ENCODE measurements at regions of chr18 and their contacts with region 1.

Region 1: GRCh38 chr18:6044773-6045172 is 149.5 kb upstream of the TMEM200C start:
- DNase-seq: no peak
- ATAC-seq: no peak
- H3K4me3 ChIP-seq: no peak overlapping the region
- H3K27ac ChIP-seq: no peak overlapping the region
- H3K4me1 ChIP-seq: no peaks in the 10 kb centered on the region
- H3K27me3 ChIP-seq: no peaks in the 10 kb centered on the region
- CTCF ChIP-seq: no peak
- EP300 ChIP-seq: no peak
- POLR2A ChIP-seq: no peak
- RAD21 ChIP-seq: no peak

Region 2: DNA sequence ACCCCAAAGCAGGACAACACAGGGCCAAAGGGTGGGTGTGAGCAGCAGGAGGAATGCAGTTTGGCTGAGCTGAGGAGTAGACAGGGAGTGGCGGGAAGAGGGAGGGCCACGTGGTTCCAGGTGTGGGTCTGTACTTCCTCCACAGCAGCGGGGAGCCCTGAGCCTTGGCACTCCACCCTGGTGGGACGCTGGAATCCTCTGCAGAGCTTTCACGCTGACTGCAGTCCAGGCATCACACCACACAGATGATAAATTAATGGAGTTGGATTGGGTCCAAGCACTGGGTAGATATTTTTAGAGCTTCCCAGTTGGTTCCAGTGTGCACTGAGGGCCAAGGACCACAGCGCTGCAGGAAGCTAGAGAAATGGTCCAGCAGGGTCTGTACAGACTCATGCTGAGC is 82.4 kb before region 1 on chr18:
- CTCF ChIA-PET with region 1: no interaction called
- POLR2A ChIA-PET with region 1: no interaction called
- in situ Hi-C with region 1: no loop called
- intact Hi-C with region 1: no loop called
- DNase-seq: no peak
- ATAC-seq: no peak
- H3K4me3 ChIP-seq: no peak overlapping the region
- H3K27ac ChIP-seq: no peak overlapping the region
- H3K4me1 ChIP-seq: no peaks in the 10 kb centered on the region
- H3K27me3 ChIP-seq: no peaks in the 10 kb centered on the region
- CTCF ChIP-seq: no peak
- EP300 ChIP-seq: no peak
- POLR2A ChIP-seq: no peak
- RAD21 ChIP-seq: no peak

Region 3: GRCh38 chr18:5983488-5983887 is 61.3 kb before region 1 on chr18:
- CTCF ChIA-PET with region 1: no interaction called
- POLR2A ChIA-PET with region 1: no interaction called
- in situ Hi-C with region 1: no loop called
- intact Hi-C with region 1: no loop called
- DNase-seq: no peak
- ATAC-seq: no peak
- H3K4me3 ChIP-seq: no peak overlapping the region
- H3K27ac ChIP-seq: no peak overlapping the region
- H3K4me1 ChIP-seq: no peaks in the 10 kb centered on the region
- H3K27me3 ChIP-seq: no peaks in the 10 kb centered on the region
- CTCF ChIP-seq: no peak
- EP300 ChIP-seq: no peak
- POLR2A ChIP-seq: no peak
- RAD21 ChIP-seq: no peak

Region 4: DNA sequence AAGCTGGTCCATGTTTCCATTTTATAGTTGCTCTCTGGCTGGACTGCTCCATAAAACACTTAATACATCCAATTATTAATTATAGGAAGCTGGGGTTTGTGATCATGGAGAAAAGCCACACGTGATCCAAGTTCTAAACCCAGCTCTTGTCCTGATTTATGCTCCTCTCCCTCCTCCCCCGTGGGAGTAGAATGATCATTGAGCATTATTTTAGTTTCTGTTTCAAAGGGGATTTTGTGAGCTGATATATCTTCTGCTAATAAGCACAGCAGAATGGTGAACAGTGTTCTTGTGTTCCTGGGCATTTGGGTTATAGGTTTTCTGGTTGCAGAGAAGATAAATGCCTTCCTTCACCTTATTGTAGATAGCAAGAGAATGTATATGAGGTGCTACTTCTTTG is 13.8 kb before region 1 on chr18:
- CTCF ChIA-PET with region 1: no interaction called
- POLR2A ChIA-PET with region 1: no interaction called
- in situ Hi-C with region 1: no loop called
- intact Hi-C with region 1: no loop called
- DNase-seq: no peak
- ATAC-seq: no peak
- H3K4me3 ChIP-seq: no peak overlapping the region
- H3K27ac ChIP-seq: no peak overlapping the region
- H3K4me1 ChIP-seq: no peaks in the 10 kb centered on the region
- H3K27me3 ChIP-seq: no peaks in the 10 kb centered on the region
- CTCF ChIP-seq: no peak
- EP300 ChIP-seq: no peak
- POLR2A ChIP-seq: no peak
- RAD21 ChIP-seq: no peak

Region 5: GRCh38 chr18:6109743-6110142 is 65.0 kb after region 1 on chr18:
- CTCF ChIA-PET with region 1: no interaction called
- POLR2A ChIA-PET with region 1: no interaction called
- in situ Hi-C with region 1: no loop called
- intact Hi-C with region 1: loop called (anchors 10 kb)
- DNase-seq: no peak
- ATAC-seq: no peak
- H3K4me3 ChIP-seq: no peak overlapping the region
- H3K27ac ChIP-seq: no peak overlapping the region
- H3K4me1 ChIP-seq: no peaks in the 10 kb centered on the region
- H3K27me3 ChIP-seq: no peaks in the 10 kb centered on the region
- CTCF ChIP-seq: no peak
- EP300 ChIP-seq: no peak
- POLR2A ChIP-seq: no peak
- RAD21 ChIP-seq: no peak